A673 (cell line): ENCODE measurements at regions of chr12 and their contacts with region 1.

Region 1: GRCh38 chr12:2583091-2583497 is 211.7 kb upstream of the FKBP4 start:
- DNase-seq: peak; percentile 65
- H3K4me3 ChIP-seq: no peak overlapping the region
- H3K27ac ChIP-seq: no peak overlapping the region
- H3K4me1 ChIP-seq: no peaks in the 10 kb centered on the region
- H3K27me3 ChIP-seq: peaks cover 14% of the 10 kb centered on the region
- CTCF ChIP-seq: peak; percentile 81

Region 2: GRCh38 chr12:2057041-2057794 is 525.9 kb before region 1 on chr12:
- CTCF ChIA-PET with region 1: interaction called, 9 read pairs
- POLR2A ChIA-PET with region 1: no interaction called
- intact Hi-C with region 1: loop called (anchors 2 kb)
- DNase-seq: peak; percentile 82
- H3K4me3 ChIP-seq: no peak overlapping the region
- H3K27ac ChIP-seq: no peak overlapping the region
- H3K4me1 ChIP-seq: peaks cover 12% of the 10 kb centered on the region
- H3K27me3 ChIP-seq: peaks cover 24% of the 10 kb centered on the region
- CTCF ChIP-seq: peak; percentile 96

Region 3: DNA sequence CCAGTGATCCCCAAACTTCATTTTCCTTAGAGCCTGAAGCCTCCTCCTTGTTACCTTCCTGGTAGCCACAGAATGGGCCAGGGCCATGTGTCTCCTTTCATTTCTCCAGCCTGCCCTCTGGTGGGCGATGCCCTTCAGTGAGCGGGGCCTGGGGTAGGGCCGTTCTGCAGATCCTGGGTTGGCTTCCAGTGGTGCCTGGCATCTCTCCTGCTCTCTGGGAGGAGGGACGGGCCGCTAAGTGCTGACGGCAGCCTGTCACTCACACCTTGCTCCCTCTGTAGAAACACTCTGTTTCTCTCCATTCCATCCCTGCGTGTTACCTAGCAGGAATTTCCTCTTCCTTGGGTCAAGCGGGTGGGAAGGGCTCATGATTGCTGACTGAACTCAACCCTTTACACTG is 298.2 kb before region 1 on chr12:
- CTCF ChIA-PET with region 1: no interaction called
- POLR2A ChIA-PET with region 1: no interaction called
- intact Hi-C with region 1: loop called (anchors 5 kb)
- DNase-seq: no peak
- H3K4me3 ChIP-seq: no peak overlapping the region
- H3K27ac ChIP-seq: peak overlapping the region; percentile 94
- H3K4me1 ChIP-seq: peaks cover 75% of the 10 kb centered on the region
- H3K27me3 ChIP-seq: no peaks in the 10 kb centered on the region
- CTCF ChIP-seq: peak; percentile 96

Region 4: GRCh38 chr12:2387103-2387834 is 195.8 kb before region 1 on chr12:
- CTCF ChIA-PET with region 1: no interaction called
- POLR2A ChIA-PET with region 1: no interaction called
- intact Hi-C with region 1: loop called (anchors 10 kb)
- DNase-seq: no peak
- H3K4me3 ChIP-seq: no peak overlapping the region
- H3K27ac ChIP-seq: no peak overlapping the region
- H3K4me1 ChIP-seq: no peaks in the 10 kb centered on the region
- H3K27me3 ChIP-seq: no peaks in the 10 kb centered on the region
- CTCF ChIP-seq: no peak